ENCODE measurements at regions of chr2 and their contacts with region 1.

Region 1: GRCh38 chr2:44167940-44168680 is 565 bp upstream of the PPM1B start:
- DNase-seq: peak; percentile 92 to 100 (median 96)
- ATAC-seq: peak; percentile 77
- H3K4me3 ChIP-seq: peak overlapping the region; percentile 57 to 79
- H3K4me3 Mint-ChIP-seq: peak overlapping the region; percentile 99
- H3K27ac ChIP-seq: peak overlapping the region; percentile 95 to 97
- H3K27ac Mint-ChIP-seq: peak overlapping the region; percentile 99
- H3K4me1 ChIP-seq: peaks cover 22% of the 10 kb centered on the region
- H3K4me1 Mint-ChIP-seq: peaks cover 38% of the 10 kb centered on the region
- H3K27me3 ChIP-seq: no peaks in the 10 kb centered on the region
- H3K27me3 Mint-ChIP-seq: no peaks in the 10 kb centered on the region
- CTCF ChIP-seq: no peak

Region 2: GRCh38 chr2:43995733-43996533 is 172.2 kb before region 1 on chr2 and contains the start of gene LRPPRC:
- CTCF ChIA-PET with region 1: no interaction called
- POLR2A ChIA-PET with region 1: no interaction called
- intact Hi-C with region 1: loop called (anchors 1 to 2 kb)
- DNase-seq: peak; percentile 77 to 96 (median 90)
- ATAC-seq: peak; percentile 96
- H3K4me3 ChIP-seq: peak within 1 kb of the TSS; percentile 78 to 94
- H3K4me3 Mint-ChIP-seq: peak within 1 kb of the TSS; percentile 91
- H3K27ac ChIP-seq: peak within 1 kb of the TSS; percentile 65 to 91
- H3K27ac Mint-ChIP-seq: peak within 1 kb of the TSS; percentile 96
- H3K4me1 ChIP-seq: peaks cover 36% of the 10 kb centered on the region
- H3K4me1 Mint-ChIP-seq: peaks cover 51% of the 10 kb centered on the region
- H3K27me3 ChIP-seq: no peaks in the 10 kb centered on the region
- H3K27me3 Mint-ChIP-seq: peaks cover 2% of the 10 kb centered on the region
- CTCF ChIP-seq: no peak
- total RNA-seq, gene LRPPRC: 62.8 to 67.2 TPM

Region 3: DNA sequence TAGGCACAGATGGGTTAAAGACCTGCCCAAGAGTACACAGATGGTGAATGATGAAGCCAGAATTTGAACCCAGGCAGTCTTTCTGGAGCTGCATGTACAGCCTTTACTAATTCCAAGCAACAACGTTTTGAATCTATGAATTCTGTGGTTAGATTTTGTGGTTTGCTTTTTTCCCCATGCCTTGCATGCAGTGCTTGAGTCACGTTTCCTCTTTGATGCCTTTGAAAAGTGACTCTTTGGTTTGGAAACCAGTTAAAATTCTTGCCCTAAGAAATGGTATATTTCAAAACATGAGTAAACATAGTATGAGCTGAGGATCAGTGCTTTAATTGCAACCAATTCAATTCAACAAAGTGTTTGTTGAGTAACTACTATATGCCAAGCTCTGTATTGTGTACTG is 47.7 kb before region 1 on chr2:
- CTCF ChIA-PET with region 1: no interaction called
- POLR2A ChIA-PET with region 1: no interaction called
- intact Hi-C with region 1: loop called in 1 of 2 experiments (anchors 1 kb)
- DNase-seq: peak in 4 of 9 experiments; percentile 1 to 65 (median 22)
- ATAC-seq: peak; percentile 74
- H3K4me3 ChIP-seq: no peak overlapping the region
- H3K4me3 Mint-ChIP-seq: no peak overlapping the region
- H3K27ac ChIP-seq: no peak overlapping the region
- H3K27ac Mint-ChIP-seq: no peak overlapping the region
- H3K4me1 ChIP-seq: peaks cover 9% of the 10 kb centered on the region
- H3K4me1 Mint-ChIP-seq: peaks cover 12% of the 10 kb centered on the region
- H3K27me3 ChIP-seq: no peaks in the 10 kb centered on the region
- H3K27me3 Mint-ChIP-seq: peaks cover 4% of the 10 kb centered on the region
- CTCF ChIP-seq: no peak

Region 4: GRCh38 chr2:44184106-44184505 is 16.0 kb after region 1 on chr2:
- CTCF ChIA-PET with region 1: interaction called, 4 read pairs
- POLR2A ChIA-PET with region 1: interaction called, 10 read pairs
- intact Hi-C with region 1: loop called (anchors 1 to 2 kb)
- DNase-seq: peak in 2 of 9 experiments; percentile 56 to 77
- ATAC-seq: peak; percentile 97
- H3K4me3 ChIP-seq: no peak overlapping the region
- H3K4me3 Mint-ChIP-seq: peak overlapping the region; percentile 65
- H3K27ac ChIP-seq: peak overlapping the region; percentile 32 to 71
- H3K27ac Mint-ChIP-seq: peak overlapping the region; percentile 93
- H3K4me1 ChIP-seq: peaks cover 73% of the 10 kb centered on the region
- H3K4me1 Mint-ChIP-seq: peaks cover 85% of the 10 kb centered on the region
- H3K27me3 ChIP-seq: no peaks in the 10 kb centered on the region
- H3K27me3 Mint-ChIP-seq: no peaks in the 10 kb centered on the region
- CTCF ChIP-seq: no peak

Region 5: DNA sequence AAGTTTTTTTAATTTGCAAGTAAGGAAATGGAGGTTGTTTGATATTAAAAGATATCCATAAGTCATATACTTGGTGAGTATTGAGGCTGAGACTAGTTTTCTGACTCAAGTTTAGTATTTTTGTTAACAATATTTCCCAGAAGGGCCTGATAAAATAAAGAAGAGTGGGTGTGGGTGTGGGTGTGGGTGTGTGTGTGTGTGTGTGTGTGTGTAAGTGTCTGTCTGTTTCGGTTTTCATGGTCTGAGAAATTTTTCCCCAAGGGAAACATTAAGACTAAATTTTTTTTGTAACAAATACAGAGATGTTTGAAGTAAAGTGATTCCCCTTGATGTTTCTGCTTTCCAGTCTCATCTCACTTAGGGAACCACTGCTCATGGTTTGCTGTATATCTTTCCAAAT is 37.1 kb after region 1 on chr2:
- CTCF ChIA-PET with region 1: no interaction called
- POLR2A ChIA-PET with region 1: no interaction called
- intact Hi-C with region 1: loop called (anchors 5 kb)
- DNase-seq: no peak
- ATAC-seq: no peak
- H3K4me3 ChIP-seq: no peak overlapping the region
- H3K4me3 Mint-ChIP-seq: no peak overlapping the region
- H3K27ac ChIP-seq: no peak overlapping the region
- H3K27ac Mint-ChIP-seq: peak overlapping the region; percentile 6
- H3K4me1 ChIP-seq: peaks cover 18% of the 10 kb centered on the region
- H3K4me1 Mint-ChIP-seq: peaks cover 54% of the 10 kb centered on the region
- H3K27me3 ChIP-seq: no peaks in the 10 kb centered on the region
- H3K27me3 Mint-ChIP-seq: no peaks in the 10 kb centered on the region
- CTCF ChIP-seq: no peak

Region 6: GRCh38 chr2:44211183-44211582 is 43.1 kb after region 1 on chr2:
- CTCF ChIA-PET with region 1: no interaction called
- POLR2A ChIA-PET with region 1: no interaction called
- intact Hi-C with region 1: loop called (anchors 5 kb)
- DNase-seq: no peak
- ATAC-seq: no peak
- H3K4me3 ChIP-seq: no peak overlapping the region
- H3K4me3 Mint-ChIP-seq: no peak overlapping the region
- H3K27ac ChIP-seq: no peak overlapping the region
- H3K27ac Mint-ChIP-seq: no peak overlapping the region
- H3K4me1 ChIP-seq: peaks cover 9% of the 10 kb centered on the region
- H3K4me1 Mint-ChIP-seq: peaks cover 30% of the 10 kb centered on the region
- H3K27me3 ChIP-seq: no peaks in the 10 kb centered on the region
- H3K27me3 Mint-ChIP-seq: no peaks in the 10 kb centered on the region
- CTCF ChIP-seq: no peak

Region 7: GRCh38 chr2:44237221-44237620 is 69.1 kb after region 1 on chr2:
- CTCF ChIA-PET with region 1: no interaction called
- POLR2A ChIA-PET with region 1: interaction called, 4 read pairs
- intact Hi-C with region 1: loop called (anchors 2 to 5 kb)
- DNase-seq: peak in 8 of 9 experiments; percentile 17 to 76 (median 30)
- ATAC-seq: peak; percentile 84
- H3K4me3 ChIP-seq: peak overlapping the region; percentile 17 to 30
- H3K4me3 Mint-ChIP-seq: peak overlapping the region; percentile 71
- H3K27ac ChIP-seq: peak overlapping the region; percentile 7 to 64
- H3K27ac Mint-ChIP-seq: peak overlapping the region; percentile 53
- H3K4me1 ChIP-seq: peaks cover 31% of the 10 kb centered on the region
- H3K4me1 Mint-ChIP-seq: peaks cover 34% of the 10 kb centered on the region
- H3K27me3 ChIP-seq: no peaks in the 10 kb centered on the region
- H3K27me3 Mint-ChIP-seq: no peaks in the 10 kb centered on the region
- CTCF ChIP-seq: no peak